ENCODE measurements at regions of chr12 and their contacts with region 1.

Region 1: DNA sequence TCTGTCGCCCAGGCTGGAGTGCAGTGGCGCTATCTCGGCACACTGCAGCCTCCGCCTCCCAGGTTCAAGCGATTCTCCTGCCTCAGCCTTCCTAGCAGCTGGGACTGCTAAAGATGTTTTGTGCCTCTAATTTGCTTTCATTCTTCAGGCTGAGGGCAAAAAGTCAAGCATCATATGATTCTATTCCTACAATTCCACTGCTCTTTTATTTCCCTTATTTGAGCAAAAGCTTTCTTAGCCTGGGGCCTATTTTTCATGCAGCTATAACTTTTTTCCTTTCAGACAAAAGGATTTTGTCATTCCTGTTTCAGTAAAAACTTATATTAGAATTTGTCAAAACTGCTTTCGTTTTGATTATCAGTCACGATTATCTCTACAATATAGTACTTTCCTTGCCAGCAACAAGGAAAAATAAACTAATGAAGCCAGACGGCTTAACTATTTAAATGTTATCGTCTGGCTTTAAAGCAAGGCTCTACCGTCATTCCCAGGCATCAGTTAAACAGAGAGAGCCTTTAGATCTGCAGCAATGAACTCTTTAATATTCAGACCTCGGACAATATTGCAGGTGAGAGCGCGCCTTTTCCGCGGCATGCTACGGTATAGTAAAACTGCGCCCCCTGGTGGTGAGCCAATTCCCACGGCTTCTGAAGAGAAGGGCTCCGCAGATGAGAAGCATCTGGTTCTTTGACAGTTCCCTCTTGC is 1.4 kb upstream of the SLC2A13 start:
- DNase-seq: peak; percentile 90 to 91 (median 91)
- ATAC-seq: peak; percentile 65 to 76 (median 72)
- H3K4me3 ChIP-seq: peak overlapping the region; percentile 15 to 52 (median 34)
- H3K27ac ChIP-seq: peak overlapping the region in 1 of 3 donors; percentile 5
- H3K4me1 ChIP-seq: peaks cover 0 to 14% (median 0%) of the 10 kb centered on the region in 4 donors
- H3K27me3 ChIP-seq: no peaks in the 10 kb centered on the region
- CTCF ChIP-seq: peak; percentile 77 to 97 (median 94)
- POLR2A ChIP-seq: no peak

Region 2: GRCh38 chr12:39764944-39765560 is 342.2 kb before region 1 on chr12:
- intact Hi-C with region 1: loop called in 1 of 2 experiments (anchors 10 kb)
- DNase-seq: no peak
- ATAC-seq: peak; percentile 82 to 87 (median 86)
- H3K4me3 ChIP-seq: no peak overlapping the region
- H3K27ac ChIP-seq: no peak overlapping the region
- H3K4me1 ChIP-seq: no peaks in the 10 kb centered on the region
- H3K27me3 ChIP-seq: no peaks in the 10 kb centered on the region
- CTCF ChIP-seq: peak; percentile 79 to 89 (median 84)
- POLR2A ChIP-seq: no peak

Region 3: DNA sequence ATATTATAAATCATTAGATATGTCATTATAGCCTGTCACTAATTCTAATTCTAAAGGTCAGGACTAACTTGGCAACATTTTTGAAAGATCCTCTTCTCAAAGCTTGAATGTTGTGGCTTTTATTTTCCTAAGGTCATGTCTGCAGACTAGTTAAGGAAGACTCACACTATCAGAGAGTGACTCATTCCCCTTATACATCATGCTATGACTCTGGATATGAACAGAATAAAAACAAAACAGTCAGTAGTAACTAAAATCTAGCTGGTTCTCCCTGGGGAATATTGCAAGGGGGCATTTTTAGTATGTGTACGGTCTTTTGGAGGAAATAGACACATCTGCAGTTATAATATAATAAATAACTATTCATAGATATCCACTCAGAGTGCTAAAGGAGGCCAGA is 172.0 kb before region 1 on chr12:
- intact Hi-C with region 1: no loop called
- DNase-seq: no peak
- ATAC-seq: no peak
- H3K4me3 ChIP-seq: no peak overlapping the region
- H3K27ac ChIP-seq: no peak overlapping the region
- H3K4me1 ChIP-seq: peaks cover 0 to 36% (median 9%) of the 10 kb centered on the region in 4 donors
- H3K27me3 ChIP-seq: no peaks in the 10 kb centered on the region
- CTCF ChIP-seq: no peak
- POLR2A ChIP-seq: no peak

Region 4: DNA sequence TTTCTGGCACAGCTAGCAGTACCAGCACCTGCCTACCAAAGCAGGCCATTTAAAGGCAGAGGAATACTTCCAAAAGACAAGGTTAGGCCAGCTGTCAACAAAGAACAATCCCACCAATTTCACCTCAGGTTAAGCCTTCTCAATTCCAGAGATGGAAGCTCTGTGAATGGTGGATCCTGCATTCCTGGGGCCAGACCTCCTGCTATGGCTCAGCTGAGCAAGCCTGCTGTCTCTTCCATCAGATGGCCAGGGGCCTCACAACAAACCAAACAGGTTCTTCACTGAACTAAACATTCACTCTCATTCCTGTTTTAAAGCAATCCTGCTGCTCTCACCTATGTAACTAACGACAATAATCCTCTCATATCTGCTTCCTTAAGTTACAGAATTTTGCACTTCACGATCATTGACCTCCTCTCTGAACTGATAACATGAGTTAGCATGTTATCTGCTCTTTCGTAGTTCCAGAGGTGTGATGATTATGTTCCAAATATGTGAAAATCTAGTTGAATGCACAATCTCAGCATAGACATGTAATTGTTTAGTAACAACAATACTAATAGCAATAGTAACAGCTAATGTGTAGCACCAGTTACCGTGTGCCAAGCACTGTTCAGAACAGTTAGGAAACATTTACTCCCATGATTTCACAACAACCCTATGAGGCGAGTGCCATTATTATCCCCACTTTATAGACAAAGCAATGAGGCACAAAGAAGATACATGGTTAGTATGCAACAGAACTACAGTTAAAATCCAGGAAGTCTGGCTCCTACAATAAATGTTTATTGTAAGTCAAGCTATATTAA is 74.6 kb before region 1 on chr12:
- intact Hi-C with region 1: loop called in 1 of 2 experiments (anchors 10 kb)
- DNase-seq: no peak
- ATAC-seq: peak; percentile 77 to 84 (median 80)
- H3K4me3 ChIP-seq: no peak overlapping the region
- H3K27ac ChIP-seq: peak overlapping the region in 2 of 3 donors; percentile 12 to 29
- H3K4me1 ChIP-seq: peaks cover 0 to 14% (median 6%) of the 10 kb centered on the region in 4 donors
- H3K27me3 ChIP-seq: no peaks in the 10 kb centered on the region
- CTCF ChIP-seq: no peak
- POLR2A ChIP-seq: no peak

Measured in right lobe of liver (tissue), 6 donors.